ENCODE measurements at regions of chr22 and their contacts with region 1.

Region 1: DNA sequence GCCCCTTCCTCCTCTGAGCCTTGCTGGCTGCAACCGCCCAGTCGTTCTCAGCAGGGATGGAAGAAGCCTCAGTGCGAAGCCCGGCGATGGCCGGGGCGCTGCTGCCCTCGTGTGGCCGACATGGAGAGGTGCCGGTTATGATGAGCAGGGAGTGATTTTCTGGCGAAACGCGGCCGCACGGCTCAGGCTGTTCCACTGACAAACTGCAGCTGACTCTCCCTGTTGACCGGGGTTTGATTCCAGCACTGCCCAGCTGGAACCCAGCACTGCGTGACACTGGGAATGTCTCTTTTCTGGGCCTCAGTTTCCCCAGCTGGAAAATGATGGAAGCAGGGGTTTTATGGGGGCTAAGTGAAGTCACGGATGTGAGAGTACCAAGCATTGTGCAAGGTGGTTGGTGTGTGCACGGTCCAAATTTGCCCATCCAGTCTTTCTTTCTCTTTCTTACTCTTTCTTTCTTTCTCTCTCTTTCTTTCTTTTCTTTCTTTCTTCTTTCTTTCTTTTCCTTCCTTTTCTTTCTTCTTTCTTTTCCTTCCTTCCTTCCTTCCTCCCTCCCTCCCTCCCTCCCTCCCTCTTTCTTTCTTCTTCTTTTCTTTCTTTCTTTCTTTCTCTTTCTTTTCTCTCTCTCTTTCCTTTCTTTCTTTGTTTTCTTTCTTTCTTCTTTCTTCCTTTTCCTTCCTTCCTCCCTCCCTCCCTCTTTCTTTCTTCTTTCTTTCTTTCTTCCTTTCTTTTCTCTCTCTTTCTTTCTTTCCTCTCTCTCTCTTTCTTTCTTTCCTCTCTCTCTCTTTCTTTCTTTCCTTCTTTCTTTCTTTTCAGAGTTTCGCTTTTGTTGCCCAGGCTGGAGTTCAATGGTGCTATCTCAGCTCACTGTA is 25.8 kb upstream of the MPPED1 start:
- DNase-seq: peak; percentile 85
- ATAC-seq: peak; percentile 93
- H3K4me3 Mint-ChIP-seq: no peak overlapping the region
- H3K27ac Mint-ChIP-seq: no peak overlapping the region
- H3K4me1 Mint-ChIP-seq: no peaks in the 10 kb centered on the region
- H3K27me3 Mint-ChIP-seq: peaks cover 12% of the 10 kb centered on the region

Region 2: GRCh38 chr22:42933481-42934091 is 452.4 kb before region 1 on chr22:
- CTCF ChIA-PET with region 1: no interaction called
- POLR2A ChIA-PET with region 1: no interaction called
- intact Hi-C with region 1: no loop called
- DNase-seq: peak; percentile 49
- ATAC-seq: peak; percentile 57
- H3K4me3 Mint-ChIP-seq: peak overlapping the region; percentile 35
- H3K27ac Mint-ChIP-seq: peak overlapping the region; percentile 60
- H3K4me1 Mint-ChIP-seq: peaks cover 68% of the 10 kb centered on the region
- H3K27me3 Mint-ChIP-seq: no peaks in the 10 kb centered on the region

Region 3: DNA sequence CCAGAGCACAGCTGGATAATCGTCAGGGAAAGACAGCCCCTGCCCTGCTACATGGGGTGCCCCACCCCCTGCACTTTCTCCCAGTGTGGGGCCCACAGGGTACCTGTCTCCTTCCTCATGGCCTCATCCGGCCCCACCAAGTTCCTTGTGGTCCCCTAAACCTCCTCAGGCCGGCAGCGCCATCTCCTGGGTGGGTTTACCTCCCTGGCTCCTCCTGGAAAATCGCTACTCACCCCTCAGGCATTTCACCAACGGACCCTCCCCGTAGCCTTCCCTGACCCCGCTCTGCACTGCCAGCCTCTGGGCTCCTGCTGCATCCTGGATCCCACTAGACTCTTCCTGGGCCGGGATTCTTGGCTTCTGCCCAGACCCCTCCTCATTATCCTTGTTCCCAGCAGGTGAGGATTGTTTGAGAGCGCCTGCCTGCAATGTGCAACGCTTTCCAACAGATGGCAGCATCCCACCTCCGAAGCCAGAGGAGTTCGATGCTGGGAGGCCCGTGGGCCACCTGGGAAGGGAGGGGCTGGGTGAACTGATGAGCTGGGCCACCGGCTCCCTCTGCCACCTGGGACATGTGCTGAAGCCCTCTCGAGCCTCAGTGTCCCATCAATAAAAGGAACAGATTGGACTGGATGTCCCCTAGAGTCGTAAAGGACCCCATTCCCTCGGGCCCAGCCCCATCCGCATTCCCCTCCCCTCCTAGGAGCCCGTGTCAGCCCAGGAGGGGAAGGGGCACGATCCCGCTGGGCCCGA is 154.9 kb before region 1 on chr22:
- CTCF ChIA-PET with region 1: interaction called, 4 read pairs
- POLR2A ChIA-PET with region 1: no interaction called
- intact Hi-C with region 1: loop called (anchors 1 kb)
- DNase-seq: peak; percentile 83
- ATAC-seq: peak; percentile 89
- H3K4me3 Mint-ChIP-seq: no peak overlapping the region
- H3K27ac Mint-ChIP-seq: no peak overlapping the region
- H3K4me1 Mint-ChIP-seq: peaks cover 4% of the 10 kb centered on the region
- H3K27me3 Mint-ChIP-seq: peaks cover 3% of the 10 kb centered on the region

Region 4: GRCh38 chr22:43346521-43346929 is 39.5 kb before region 1 on chr22:
- CTCF ChIA-PET with region 1: interaction called, 4 read pairs
- POLR2A ChIA-PET with region 1: no interaction called
- intact Hi-C with region 1: loop called in 1 of 2 experiments (anchors 1 kb)
- DNase-seq: peak; percentile 81
- ATAC-seq: peak; percentile 67
- H3K4me3 Mint-ChIP-seq: no peak overlapping the region
- H3K27ac Mint-ChIP-seq: no peak overlapping the region
- H3K4me1 Mint-ChIP-seq: peaks cover 8% of the 10 kb centered on the region
- H3K27me3 Mint-ChIP-seq: peaks cover 38% of the 10 kb centered on the region

Region 5: DNA sequence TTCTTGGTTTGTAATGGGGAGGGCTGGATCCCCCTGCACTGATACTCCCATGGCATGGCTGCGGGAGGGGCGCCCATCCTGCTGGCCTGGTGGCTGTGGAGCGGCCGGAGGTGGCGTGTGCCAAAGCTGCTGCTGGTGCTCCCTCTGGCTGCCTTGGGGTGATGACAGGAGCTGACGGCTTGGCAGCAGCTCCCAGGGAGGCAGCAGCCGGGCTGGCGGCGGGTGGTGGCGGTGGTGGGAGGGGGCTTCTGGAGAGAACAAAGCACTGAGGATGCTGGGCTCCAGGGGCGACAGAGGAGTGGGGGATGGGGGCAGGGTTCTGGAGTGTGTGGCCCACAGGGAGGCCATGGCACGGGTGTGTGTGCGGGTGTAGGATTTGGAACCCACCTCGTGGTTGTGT is 14.4 kb after region 1 on chr22:
- CTCF ChIA-PET with region 1: no interaction called
- POLR2A ChIA-PET with region 1: no interaction called
- intact Hi-C with region 1: no loop called
- DNase-seq: no peak
- ATAC-seq: no peak
- H3K4me3 Mint-ChIP-seq: no peak overlapping the region
- H3K27ac Mint-ChIP-seq: no peak overlapping the region
- H3K4me1 Mint-ChIP-seq: no peaks in the 10 kb centered on the region
- H3K27me3 Mint-ChIP-seq: peaks cover 6% of the 10 kb centered on the region

Region 6: GRCh38 chr22:43537014-43537585 is 151.1 kb after region 1 on chr22:
- CTCF ChIA-PET with region 1: no interaction called
- POLR2A ChIA-PET with region 1: no interaction called
- intact Hi-C with region 1: no loop called
- DNase-seq: peak; percentile 23
- ATAC-seq: no peak
- H3K4me3 Mint-ChIP-seq: no peak overlapping the region
- H3K27ac Mint-ChIP-seq: no peak overlapping the region
- H3K4me1 Mint-ChIP-seq: no peaks in the 10 kb centered on the region
- H3K27me3 Mint-ChIP-seq: peaks cover 5% of the 10 kb centered on the region

Region 7: DNA sequence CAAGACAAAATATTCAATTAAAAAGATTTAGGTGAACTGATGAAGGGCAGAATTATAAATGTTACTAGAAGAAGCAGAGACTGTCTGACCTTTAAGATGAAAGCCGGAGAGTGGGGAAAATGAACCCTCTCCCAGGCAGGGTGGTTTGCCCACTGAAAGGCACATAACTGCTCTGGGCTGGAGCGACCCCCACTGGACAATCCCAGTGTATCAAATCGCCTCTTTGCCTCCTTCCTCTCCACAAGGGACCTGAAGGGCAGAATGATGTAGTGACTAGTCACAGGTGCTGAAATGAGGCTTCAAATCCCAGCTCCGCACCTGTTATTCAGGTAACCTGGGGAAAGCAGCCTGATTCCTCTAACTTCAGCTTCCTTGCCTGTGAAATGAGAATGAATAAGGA is 357.1 kb after region 1 on chr22:
- CTCF ChIA-PET with region 1: no interaction called
- POLR2A ChIA-PET with region 1: no interaction called
- intact Hi-C with region 1: loop called in 1 of 2 experiments (anchors 5 kb)
- DNase-seq: peak; percentile 11
- ATAC-seq: no peak
- H3K4me3 Mint-ChIP-seq: no peak overlapping the region
- H3K27ac Mint-ChIP-seq: no peak overlapping the region
- H3K4me1 Mint-ChIP-seq: no peaks in the 10 kb centered on the region
- H3K27me3 Mint-ChIP-seq: peaks cover 4% of the 10 kb centered on the region

Region 8: GRCh38 chr22:44625981-44626687 is 1240.1 kb after region 1 on chr22:
- CTCF ChIA-PET with region 1: no interaction called
- POLR2A ChIA-PET with region 1: no interaction called
- intact Hi-C with region 1: loop called in 1 of 2 experiments (anchors 1 kb)
- DNase-seq: peak; percentile 87
- ATAC-seq: peak; percentile 85
- H3K4me3 Mint-ChIP-seq: no peak overlapping the region
- H3K27ac Mint-ChIP-seq: no peak overlapping the region
- H3K4me1 Mint-ChIP-seq: peaks cover 3% of the 10 kb centered on the region
- H3K27me3 Mint-ChIP-seq: peaks cover 3% of the 10 kb centered on the region